Activated CD4-positive, alpha-beta T cell treated with anti-CD3 and anti-CD28 coated beads, Interleukin-2, amount 10 ng/mL, durations not matched to agents 24 days and 14 days (primary cell): ENCODE measurements at regions of chr10 and their contacts with region 1.

Region 1: DNA sequence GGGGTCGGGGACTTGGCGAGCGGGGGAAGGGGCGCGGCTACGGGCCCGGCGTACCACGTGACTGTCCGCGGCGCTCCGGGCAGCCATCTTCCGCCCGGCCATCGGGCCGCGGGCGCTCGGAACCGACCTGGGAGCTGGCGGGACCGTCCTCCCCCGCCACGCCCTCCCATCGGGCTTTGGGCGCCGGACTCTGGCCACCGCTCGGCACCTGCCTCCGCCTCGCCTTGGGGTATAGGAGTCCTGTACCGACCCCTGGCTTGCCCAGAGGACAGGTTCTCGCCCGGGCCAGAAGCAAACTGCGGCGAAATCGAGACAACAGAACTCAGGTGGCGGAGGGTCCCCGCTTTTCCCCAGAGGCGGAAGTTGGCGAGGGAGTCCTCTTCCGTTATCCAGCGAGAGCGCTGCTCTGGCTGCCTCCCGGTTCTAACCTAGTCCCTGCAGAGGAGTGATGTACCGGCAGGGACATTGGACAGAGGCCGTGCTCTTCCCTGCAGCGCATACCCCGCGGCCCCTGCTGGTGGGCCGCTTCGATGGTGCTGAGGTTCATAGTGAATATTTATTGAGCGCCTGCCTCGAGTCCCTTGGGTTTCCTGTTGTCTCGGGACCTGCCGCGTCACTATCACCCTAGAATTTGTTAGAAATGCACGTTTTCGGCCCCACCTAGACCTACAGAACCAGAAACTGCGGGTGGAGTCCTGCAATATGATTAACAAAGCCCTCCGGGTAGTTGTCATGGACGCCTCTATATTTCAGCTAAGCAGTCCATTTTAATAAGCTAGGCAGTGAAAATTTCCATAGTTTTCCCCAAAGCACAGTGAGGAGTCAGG is 1.3 kb upstream of the SGMS1 start:
- DNase-seq: peak; percentile 86
- H3K4me3 Mint-ChIP-seq: peak overlapping the region; percentile 90
- H3K27ac Mint-ChIP-seq: peak overlapping the region; percentile 92
- H3K4me1 Mint-ChIP-seq: peaks cover 34% of the 10 kb centered on the region
- H3K27me3 Mint-ChIP-seq: peaks cover 3% of the 10 kb centered on the region

Region 2: DNA sequence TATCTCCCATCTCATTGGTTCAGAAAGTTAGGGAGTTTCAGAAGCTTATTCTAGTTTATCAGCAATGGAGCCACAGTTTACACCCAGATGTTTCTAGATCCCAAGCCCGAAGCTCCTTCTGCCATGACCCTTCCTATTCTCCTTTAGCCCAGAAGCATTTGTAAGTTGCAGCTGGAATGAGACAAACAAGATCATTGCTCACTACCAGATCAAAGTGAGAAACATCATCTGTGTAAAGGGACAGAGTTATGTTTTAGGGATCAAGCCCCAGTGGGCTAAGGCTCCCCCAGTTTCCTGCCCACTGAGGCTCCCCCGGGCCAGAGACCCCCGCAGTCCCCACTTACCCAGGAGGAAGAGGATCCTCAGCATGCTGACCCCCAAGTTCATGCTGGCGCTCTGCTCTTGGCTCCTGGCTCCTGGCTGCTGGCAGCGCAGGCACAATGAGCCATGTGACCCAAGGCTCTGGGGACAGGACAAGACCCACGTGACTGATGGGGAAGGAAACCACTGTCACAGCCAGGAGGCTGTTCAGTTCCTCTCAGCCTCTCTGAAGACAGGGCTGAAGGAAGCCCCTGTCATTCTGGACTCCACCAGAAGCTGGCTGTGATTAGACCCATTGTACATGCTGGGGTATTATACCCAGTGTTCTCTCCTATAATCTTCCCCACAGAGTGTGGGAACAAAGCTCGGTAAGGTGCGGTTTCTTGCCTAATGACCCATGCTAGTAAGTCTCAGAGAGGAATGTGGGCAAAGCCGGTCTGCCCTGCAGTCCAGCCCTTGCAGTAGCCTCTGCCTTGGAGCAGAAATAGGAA is 1436.9 kb before region 1 on chr10 and contains the start of gene TMEM273:
- intact Hi-C with region 1: loop called (anchors 5 kb)
- DNase-seq: peak; percentile 77
- H3K4me3 Mint-ChIP-seq: peak within 1 kb of the TSS; percentile 83
- H3K27ac Mint-ChIP-seq: peak within 1 kb of the TSS; percentile 77
- H3K4me1 Mint-ChIP-seq: peaks cover 50% of the 10 kb centered on the region
- H3K27me3 Mint-ChIP-seq: peaks cover 6% of the 10 kb centered on the region
- total RNA-seq, gene TMEM273: 34.3 and 36.4 TPM in 2 replicates

Region 3: DNA sequence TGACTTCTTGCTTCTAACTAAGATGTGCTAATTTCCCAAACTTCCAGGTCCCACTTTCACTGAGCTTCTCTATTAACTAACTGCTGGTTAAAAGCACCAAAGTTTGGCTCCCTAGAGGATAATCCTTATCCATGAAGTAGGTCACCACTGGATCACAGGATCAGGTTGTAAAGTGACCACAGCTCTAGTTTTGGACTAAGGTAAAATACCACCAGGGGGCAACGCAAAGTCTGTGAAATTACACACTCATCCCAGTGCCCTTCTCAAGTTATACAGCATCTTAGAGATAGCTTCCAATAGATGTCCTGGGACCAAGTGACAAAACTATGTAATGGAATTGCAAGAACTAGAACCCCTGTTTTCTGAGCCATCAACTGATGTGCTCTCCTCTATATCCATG is 257.3 kb before region 1 on chr10:
- intact Hi-C with region 1: loop called (anchors 2 kb)
- DNase-seq: peak; percentile 63
- H3K4me3 Mint-ChIP-seq: no peak overlapping the region
- H3K27ac Mint-ChIP-seq: no peak overlapping the region
- H3K4me1 Mint-ChIP-seq: peaks cover 7% of the 10 kb centered on the region
- H3K27me3 Mint-ChIP-seq: no peaks in the 10 kb centered on the region

Region 4: DNA sequence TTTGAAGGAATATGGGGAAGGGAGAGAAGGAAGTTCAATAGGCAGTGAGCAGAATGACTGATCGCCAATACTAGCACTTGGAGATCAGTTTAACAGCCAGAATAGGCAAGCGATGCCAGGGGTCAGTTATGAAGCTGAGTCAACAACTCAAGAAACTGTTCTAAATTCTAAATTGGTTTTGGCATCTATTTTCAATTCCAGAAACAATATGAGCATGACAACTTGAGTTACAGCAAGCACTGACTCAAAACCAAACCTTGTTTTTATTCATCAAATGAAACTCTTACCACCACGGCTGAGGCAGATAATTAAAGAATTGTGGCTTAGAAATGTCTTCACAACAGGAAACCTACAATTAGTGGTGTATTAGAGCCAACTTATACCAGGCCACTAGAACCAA is 193.3 kb before region 1 on chr10:
- intact Hi-C with region 1: loop called (anchors 1 kb)
- DNase-seq: peak; percentile 57
- H3K4me3 Mint-ChIP-seq: peak overlapping the region; percentile 11
- H3K27ac Mint-ChIP-seq: peak overlapping the region; percentile 14
- H3K4me1 Mint-ChIP-seq: peaks cover 22% of the 10 kb centered on the region
- H3K27me3 Mint-ChIP-seq: no peaks in the 10 kb centered on the region

Region 5: DNA sequence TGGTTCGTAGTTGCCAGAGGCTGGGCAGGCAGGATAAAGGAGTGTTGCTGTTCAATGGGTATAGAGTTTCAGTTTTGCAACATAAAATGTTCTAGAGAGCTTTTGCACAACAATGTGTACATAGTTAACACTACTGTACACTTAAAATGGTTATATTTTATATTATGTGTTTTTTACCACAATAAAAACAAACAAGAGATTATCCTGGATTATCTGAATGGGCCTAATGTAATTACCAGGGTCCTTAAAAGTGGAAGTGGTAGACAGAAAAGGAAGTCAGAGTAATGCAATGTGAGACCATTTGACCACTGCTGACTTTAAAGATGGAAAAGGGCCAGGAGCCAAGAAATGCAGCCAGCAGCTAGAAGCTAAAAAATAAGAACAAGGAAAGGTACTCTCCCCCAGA is 161.1 kb before region 1 on chr10:
- intact Hi-C with region 1: no loop called
- DNase-seq: peak; percentile 36
- H3K4me3 Mint-ChIP-seq: no peak overlapping the region
- H3K27ac Mint-ChIP-seq: no peak overlapping the region
- H3K4me1 Mint-ChIP-seq: peaks cover 19% of the 10 kb centered on the region
- H3K27me3 Mint-ChIP-seq: no peaks in the 10 kb centered on the region

Region 6: DNA sequence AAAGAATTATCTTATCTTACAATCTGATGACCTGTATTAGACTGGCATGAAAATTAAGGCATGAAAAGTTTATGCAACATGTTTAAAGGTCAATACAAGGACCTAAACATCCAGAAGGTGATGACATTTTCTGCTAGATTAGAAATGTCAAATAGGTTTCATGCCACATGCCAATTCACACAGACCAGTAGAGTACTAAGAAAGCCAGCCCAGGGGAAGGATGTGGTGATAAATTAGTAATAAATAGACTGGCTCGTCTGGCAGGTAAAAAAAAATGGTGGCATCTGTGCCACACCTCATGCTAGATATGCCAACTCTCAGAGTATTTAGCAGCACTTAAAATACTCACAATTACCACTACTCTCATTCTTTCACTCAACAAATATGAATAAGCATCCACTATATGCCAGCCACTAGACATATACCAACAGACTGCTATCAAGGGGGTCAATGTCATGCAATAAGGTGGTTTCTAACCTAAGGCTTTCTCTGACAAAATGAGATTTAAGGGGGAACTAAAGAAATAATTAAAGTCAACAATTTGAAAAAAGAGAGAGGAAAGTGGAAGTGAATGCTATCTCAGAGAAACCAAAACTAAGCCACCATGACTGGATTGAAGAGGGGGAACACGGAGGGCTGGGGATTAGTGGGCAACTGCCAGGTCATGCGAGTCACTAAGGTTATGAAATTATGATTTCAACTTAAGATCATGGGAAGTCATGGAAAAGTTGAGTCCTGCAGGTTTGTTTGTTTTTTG is 84.8 kb before region 1 on chr10:
- intact Hi-C with region 1: loop called (anchors 1 kb)
- DNase-seq: peak; percentile 71
- H3K4me3 Mint-ChIP-seq: peak overlapping the region; percentile 63
- H3K27ac Mint-ChIP-seq: peak overlapping the region; percentile 87
- H3K4me1 Mint-ChIP-seq: peaks cover 72% of the 10 kb centered on the region
- H3K27me3 Mint-ChIP-seq: no peaks in the 10 kb centered on the region

Region 7: DNA sequence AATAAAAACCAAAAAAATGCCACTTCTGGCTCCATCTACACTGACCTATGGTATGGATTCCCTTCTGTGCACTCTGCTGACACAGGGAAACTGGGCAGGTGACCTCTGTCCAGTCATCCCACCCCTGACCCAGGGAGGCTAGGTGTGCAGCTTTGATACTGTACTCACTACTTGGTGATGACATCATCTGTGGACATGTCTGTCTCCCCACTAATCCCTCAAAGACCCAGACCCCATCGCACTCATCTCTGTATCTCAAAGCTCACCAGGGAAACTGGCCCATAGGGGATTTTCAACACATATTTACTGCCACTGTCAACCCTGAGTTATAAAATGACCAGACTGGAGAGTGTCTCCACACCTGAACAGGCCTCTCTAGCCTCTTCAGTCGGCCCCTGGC is 11.9 kb before region 1 on chr10:
- intact Hi-C with region 1: loop called (anchors 1 kb)
- DNase-seq: no peak
- H3K4me3 Mint-ChIP-seq: no peak overlapping the region
- H3K27ac Mint-ChIP-seq: no peak overlapping the region
- H3K4me1 Mint-ChIP-seq: peaks cover 13% of the 10 kb centered on the region
- H3K27me3 Mint-ChIP-seq: no peaks in the 10 kb centered on the region

Region 8: GRCh38 chr10:50788951-50789945 is 164.2 kb after region 1 on chr10:
- intact Hi-C with region 1: no loop called
- DNase-seq: no peak
- H3K4me3 Mint-ChIP-seq: no peak overlapping the region
- H3K27ac Mint-ChIP-seq: no peak overlapping the region
- H3K4me1 Mint-ChIP-seq: no peaks in the 10 kb centered on the region
- H3K27me3 Mint-ChIP-seq: peaks cover 6% of the 10 kb centered on the region

Region 9: DNA sequence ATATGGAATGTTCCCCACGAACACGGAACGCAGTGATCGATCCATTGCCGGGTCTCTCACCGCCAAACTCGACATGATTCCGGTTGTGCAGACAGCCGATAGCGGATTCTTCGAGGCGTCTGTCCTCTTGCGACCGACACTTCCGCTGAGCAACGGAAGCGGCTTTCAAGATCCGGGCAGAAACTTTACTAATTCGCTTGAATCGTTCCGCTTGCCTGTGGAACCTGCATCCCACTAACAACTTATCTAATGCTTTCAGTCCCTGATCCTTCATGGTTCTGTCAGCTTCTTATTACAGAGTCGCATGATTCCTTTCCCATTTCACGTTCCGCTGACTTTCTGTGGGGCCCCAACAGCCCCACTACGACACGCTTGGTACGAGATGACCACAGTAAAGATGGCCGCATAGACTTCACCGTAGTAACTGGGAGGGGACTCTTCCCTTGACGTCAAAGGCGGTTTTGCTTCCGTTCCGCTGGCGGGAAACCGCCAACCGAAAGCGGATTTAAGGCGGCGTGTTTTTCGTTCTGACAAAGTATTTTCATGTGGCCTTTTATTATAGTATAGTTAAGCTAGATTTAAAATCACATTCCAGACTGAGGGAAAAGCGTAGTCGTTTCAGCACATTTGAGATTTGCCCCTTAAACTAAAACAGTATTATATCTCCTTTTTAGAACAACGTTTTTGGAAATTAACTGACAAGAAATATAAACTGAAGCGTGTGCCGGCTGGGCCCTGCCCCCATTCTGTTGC is 1074.6 kb after region 1 on chr10 and contains the start of gene CSTF2T:
- intact Hi-C with region 1: loop called (anchors 10 kb)
- DNase-seq: peak; percentile 98
- H3K4me3 Mint-ChIP-seq: peak within 1 kb of the TSS; percentile 99
- H3K27ac Mint-ChIP-seq: peak within 1 kb of the TSS; percentile 100
- H3K4me1 Mint-ChIP-seq: peaks cover 45% of the 10 kb centered on the region
- H3K27me3 Mint-ChIP-seq: no peaks in the 10 kb centered on the region
- total RNA-seq, gene CSTF2T: 36.2 and 36.5 TPM in 2 replicates